AG04450 (cell line): ENCODE measurements at regions of chr19 and their contacts with region 1.

Region 1: GRCh38 chr19:33778089-33778791 is 18.4 kb upstream of the KCTD15 start:
- DNase-seq: no peak
- H3K4me3 ChIP-seq: no peak overlapping the region
- H3K27ac ChIP-seq: peak overlapping the region; percentile 11
- H3K27me3 ChIP-seq: peaks cover 11% of the 10 kb centered on the region
- CTCF ChIP-seq: peak; percentile 100

Region 2: GRCh38 chr19:33698664-33699435 is 79.4 kb before region 1 on chr19:
- CTCF ChIA-PET with region 1: no interaction called
- POLR2A ChIA-PET with region 1: no interaction called
- DNase-seq: no peak
- H3K4me3 ChIP-seq: no peak overlapping the region
- H3K27ac ChIP-seq: no peak overlapping the region
- H3K27me3 ChIP-seq: no peaks in the 10 kb centered on the region
- CTCF ChIP-seq: no peak

Region 3: GRCh38 chr19:33795370-33796163 is 17.3 kb after region 1 on chr19:
- CTCF ChIA-PET with region 1: interaction called, 62 read pairs
- POLR2A ChIA-PET with region 1: interaction called, 6 read pairs
- DNase-seq: no peak
- H3K4me3 ChIP-seq: peak overlapping the region; percentile 70
- H3K27ac ChIP-seq: peak overlapping the region; percentile 80
- H3K27me3 ChIP-seq: peaks cover 8% of the 10 kb centered on the region
- CTCF ChIP-seq: peak; percentile 63

Region 4: GRCh38 chr19:33819880-33820781 is 41.9 kb after region 1 on chr19:
- CTCF ChIA-PET with region 1: interaction called, 10 read pairs
- POLR2A ChIA-PET with region 1: no interaction called
- DNase-seq: no peak
- H3K4me3 ChIP-seq: peak overlapping the region; percentile 34
- H3K27ac ChIP-seq: peak overlapping the region; percentile 21
- H3K27me3 ChIP-seq: no peaks in the 10 kb centered on the region
- CTCF ChIP-seq: no peak